ENCODE measurements at regions of chr6 and their contacts with region 1.

Region 1: GRCh38 chr6:80004173-80005072 is at the start of gene TTK:
- DNase-seq: peak; percentile 98
- H3K4me3 Mint-ChIP-seq: peak within 1 kb of the TSS; percentile 98
- H3K27ac Mint-ChIP-seq: peak within 1 kb of the TSS; percentile 96
- H3K4me1 Mint-ChIP-seq: peaks cover 37% of the 10 kb centered on the region
- H3K27me3 Mint-ChIP-seq: peaks cover 6% of the 10 kb centered on the region
- total RNA-seq, gene TTK: 21.9 and 22.4 TPM in 2 replicates

Region 2: DNA sequence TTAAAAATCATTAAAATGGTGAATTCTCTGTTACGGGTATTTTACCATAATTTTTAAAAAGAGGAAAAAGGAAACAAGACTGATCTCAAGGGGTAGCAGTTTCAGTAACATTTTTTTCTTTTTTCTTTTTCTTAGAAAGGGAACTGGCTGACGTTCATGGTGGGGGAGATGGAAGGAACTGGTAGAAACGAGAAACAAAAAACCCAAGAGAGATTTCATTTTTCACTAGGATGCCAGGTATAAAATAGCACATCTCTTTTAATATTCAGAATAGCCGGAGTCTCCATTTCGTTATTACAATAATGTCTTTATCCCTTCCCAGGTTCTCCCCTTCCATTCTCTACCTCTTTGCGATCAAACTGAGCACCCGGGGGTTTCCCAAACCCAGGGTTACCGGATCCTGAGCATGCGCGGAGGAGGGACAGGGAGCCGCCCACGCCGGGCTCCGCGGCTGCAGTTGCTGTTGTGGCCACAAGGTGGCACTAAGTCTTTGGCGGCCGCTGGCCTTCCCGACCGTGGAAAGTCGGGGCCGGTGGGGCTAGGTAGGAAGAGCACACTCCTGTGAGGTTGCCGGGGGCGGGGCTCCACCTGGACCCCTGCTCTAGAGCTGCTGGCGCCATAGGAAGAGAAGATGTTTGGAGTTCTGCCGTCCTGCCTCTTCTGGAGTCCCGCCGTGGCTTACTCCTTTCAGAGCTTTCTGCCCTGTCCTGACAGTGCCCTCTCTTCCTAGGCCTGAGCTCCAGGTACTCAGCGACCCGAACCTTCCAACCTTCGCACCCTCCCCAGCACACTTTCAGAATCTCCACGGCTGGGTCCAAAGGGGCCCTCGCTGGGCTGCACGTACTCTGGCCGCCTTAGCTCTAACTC is 226.5 kb before region 1 on chr6:
- intact Hi-C with region 1: loop called (anchors 5 kb)
- DNase-seq: peak; percentile 97
- H3K4me3 Mint-ChIP-seq: peak overlapping the region; percentile 79
- H3K27ac Mint-ChIP-seq: peak overlapping the region; percentile 57
- H3K4me1 Mint-ChIP-seq: peaks cover 9% of the 10 kb centered on the region
- H3K27me3 Mint-ChIP-seq: no peaks in the 10 kb centered on the region

Region 3: DNA sequence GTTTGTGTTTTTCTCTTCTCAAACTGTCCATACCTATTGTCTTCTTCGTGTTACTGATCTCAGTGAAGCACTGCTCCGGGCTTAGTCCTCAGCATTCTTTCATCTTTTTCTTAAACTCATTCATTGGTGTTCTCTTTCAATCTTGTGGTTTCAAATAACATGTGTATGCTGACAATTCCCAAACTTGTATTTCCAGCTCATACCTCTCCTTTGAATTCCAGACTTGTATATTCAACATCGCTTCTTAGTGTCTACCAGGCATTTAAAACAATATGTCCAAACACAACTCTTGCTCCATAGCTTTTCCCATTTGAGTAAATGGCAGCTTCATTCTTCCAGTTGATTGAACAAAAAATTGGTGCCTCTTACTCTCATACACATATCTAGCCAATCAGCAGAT is 27.9 kb after region 1 on chr6:
- intact Hi-C with region 1: loop called (anchors 2 kb)
- DNase-seq: no peak
- H3K4me3 Mint-ChIP-seq: no peak overlapping the region
- H3K27ac Mint-ChIP-seq: no peak overlapping the region
- H3K4me1 Mint-ChIP-seq: peaks cover 11% of the 10 kb centered on the region
- H3K27me3 Mint-ChIP-seq: no peaks in the 10 kb centered on the region

Region 4: DNA sequence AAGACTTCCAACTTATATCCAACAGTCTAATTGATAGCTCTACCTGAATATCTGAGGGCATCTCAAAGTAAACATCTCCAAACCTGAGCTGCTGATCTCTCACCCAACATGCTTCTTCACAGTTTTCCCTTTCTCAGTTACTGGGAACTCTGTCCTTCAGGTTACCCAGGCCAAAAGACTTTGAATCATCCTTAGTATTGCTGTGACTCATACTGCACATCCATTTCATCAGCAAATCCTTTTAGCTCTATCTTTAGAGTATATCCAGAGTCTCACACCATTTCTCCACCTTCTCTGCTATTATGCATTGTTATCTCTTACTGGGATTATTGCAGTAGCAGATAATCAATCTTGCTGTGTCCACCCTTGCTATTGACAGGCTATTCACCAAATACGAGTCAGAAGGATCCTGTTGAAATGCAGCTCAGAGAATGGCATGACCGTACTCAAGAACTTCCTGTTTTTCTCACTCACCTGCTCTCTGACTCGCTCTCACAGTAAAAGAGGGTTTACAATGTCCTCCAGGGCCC is 159.3 kb after region 1 on chr6:
- intact Hi-C with region 1: loop called (anchors 5 kb)
- DNase-seq: peak; percentile 73
- H3K4me3 Mint-ChIP-seq: no peak overlapping the region
- H3K27ac Mint-ChIP-seq: no peak overlapping the region
- H3K4me1 Mint-ChIP-seq: peaks cover 15% of the 10 kb centered on the region
- H3K27me3 Mint-ChIP-seq: no peaks in the 10 kb centered on the region

Measured in activated CD4-positive, alpha-beta T cell treated with anti-CD3 and anti-CD28 coated beads, Interleukin-2, amount 10 ng/mL, durations not matched to agents 24 days and 14 days (primary cell).